Activated CD4-positive, alpha-beta memory T cell treated with anti-CD3 and anti-CD28 coated beads for 36 hours (primary cell): ENCODE measurements at regions of chr12 and their contacts with region 1.

Region 1: DNA sequence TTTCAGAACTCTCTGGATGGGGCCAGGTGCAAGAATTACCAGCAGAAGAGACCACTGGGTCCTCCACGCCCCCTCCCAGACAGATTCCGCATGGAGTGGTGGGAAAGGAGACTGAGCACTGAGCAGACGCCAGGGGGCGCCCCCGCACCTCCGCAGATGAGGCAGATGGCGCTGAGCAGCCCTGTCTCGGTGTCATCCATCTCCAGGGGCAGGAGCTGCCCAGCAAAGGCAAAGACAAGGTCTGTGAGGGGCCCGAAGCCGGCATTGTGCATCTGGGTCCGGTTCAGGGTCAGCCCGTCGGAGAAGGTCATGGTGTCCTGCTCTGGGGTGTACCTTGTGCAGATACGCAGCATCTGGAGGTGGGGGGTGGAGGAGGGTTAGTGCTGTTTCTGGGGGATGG is 6.3 kb upstream of the ITGB7 start:
- DNase-seq: peak; percentile 89
- H3K4me3 Mint-ChIP-seq: no peak overlapping the region
- H3K27ac Mint-ChIP-seq: no peak overlapping the region
- H3K4me1 Mint-ChIP-seq: peaks cover 61% of the 10 kb centered on the region
- H3K27me3 Mint-ChIP-seq: no peaks in the 10 kb centered on the region

Region 2: DNA sequence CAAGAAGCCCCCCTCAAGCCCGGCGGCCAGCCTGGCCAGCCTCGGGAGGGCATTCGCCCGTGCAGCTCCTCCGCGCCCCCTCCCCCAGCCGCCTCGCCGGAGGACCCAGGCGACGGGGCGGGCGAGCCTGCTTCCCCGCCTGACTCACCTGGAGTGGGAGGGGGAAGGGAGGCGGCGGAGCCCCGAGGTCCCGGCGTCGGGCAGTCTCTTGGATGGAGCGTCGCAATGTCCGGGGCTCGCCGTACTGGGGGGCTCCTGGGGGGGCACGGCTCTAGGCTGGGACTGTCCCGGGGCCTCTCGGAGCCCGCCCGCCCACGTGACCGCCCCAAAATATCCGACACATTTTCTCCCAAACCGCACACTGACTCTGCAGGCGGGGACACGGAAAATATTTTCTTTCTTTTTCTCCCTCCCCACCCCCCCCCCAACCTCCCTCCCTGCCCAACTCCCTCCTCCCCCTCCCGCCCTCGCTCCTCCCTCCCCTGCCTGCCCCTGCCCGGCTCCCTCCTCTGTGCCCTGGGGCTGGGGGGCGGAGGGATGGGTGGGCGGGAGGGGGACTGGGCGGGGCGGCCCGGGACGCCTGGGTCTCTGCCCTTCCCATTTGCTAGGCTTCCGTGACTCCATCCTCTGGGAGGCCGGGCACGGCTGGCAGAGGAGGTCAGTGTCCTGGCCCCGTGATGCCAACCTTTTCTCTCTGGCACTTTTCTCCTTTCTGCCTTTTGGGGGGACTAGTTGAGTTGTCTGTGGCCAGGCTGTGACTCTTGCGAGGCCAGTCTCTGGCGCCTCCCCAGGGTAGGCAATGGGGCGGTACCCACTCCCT is 18.7 kb after region 1 on chr12 and contains the start of gene RARG:
- CTCF ChIA-PET with region 1: interaction called, 30 read pairs
- POLR2A ChIA-PET with region 1: interaction called, 18 read pairs
- intact Hi-C with region 1: no loop called
- DNase-seq: peak; percentile 81
- H3K4me3 Mint-ChIP-seq: peak within 1 kb of the TSS; percentile 86
- H3K27ac Mint-ChIP-seq: peak within 1 kb of the TSS; percentile 91
- H3K4me1 Mint-ChIP-seq: peaks cover 74% of the 10 kb centered on the region
- H3K27me3 Mint-ChIP-seq: no peaks in the 10 kb centered on the region
- total RNA-seq, gene RARG: 21.8 to 25.2 TPM

Region 3: DNA sequence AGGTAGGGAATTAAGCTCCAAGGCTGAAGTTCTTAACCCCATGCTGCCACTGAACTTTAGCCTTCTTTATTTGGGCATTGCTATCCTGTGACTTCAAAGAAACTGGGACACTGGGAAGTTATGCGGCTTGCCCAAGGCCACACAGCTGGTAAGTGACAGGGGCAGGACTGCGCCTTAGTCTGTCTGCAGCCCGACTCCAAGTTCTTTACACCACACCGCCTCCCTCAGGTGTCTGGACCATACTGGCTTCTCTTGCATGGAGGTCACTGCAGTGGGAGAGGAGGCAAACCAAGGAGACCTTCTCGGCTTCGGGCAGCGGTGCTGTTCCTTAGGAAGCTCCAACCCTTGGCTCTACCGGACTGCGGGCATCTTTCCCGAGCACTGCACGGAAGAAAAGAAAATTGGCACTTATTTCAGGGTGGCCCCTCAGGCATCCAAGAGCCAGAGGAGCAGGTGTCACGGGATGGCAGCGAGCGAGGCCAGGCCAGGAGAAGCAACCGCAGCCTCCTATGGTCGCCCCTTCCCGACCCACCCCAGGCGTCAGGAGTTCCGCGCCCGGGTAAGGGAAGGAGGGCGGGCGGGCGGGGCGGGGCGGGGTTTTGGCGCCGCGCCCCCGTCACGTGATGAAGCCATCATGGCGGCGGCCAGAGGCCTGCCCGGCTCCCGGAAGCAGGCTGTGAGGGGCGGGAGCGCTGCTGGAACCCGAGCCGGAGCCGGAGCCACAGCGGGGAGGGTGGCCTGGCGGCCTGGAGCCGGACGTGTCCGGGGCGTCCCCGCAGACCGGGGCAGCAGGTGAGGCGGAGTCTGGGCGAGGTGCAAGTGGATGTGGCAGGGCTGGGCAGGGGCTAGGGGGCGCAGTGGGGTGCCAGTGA is 38.4 kb after region 1 on chr12:
- CTCF ChIA-PET with region 1: interaction called, 164 read pairs
- POLR2A ChIA-PET with region 1: interaction called, 5 read pairs
- intact Hi-C with region 1: loop called (anchors 1 kb)
- DNase-seq: peak; percentile 79
- H3K4me3 Mint-ChIP-seq: peak overlapping the region; percentile 97
- H3K27ac Mint-ChIP-seq: peak overlapping the region; percentile 89
- H3K4me1 Mint-ChIP-seq: peaks cover 40% of the 10 kb centered on the region
- H3K27me3 Mint-ChIP-seq: no peaks in the 10 kb centered on the region

Region 4: DNA sequence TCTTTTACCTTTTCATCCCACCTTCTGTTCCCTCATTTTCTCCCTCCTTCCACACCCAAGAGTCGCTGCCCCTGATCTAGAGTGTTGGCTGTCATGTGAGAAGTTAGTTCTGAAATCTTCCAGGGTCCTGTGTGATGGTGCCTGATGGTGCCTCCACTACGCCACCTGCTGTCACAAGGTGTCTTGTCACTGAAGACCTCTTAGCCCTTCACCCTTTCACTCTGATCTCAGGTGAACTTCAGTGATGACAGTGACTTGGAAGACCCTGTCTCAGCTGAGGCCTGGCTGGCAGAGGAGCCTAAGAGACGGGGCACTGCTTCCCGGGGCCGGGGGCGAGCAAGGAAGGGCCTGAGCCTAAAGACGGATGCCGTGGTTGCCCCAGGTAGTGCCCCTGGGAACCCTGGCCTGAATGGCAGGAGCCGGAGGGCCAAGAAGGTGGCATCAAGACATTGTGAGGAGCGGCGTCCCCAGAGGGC is 74.4 kb after region 1 on chr12:
- CTCF ChIA-PET with region 1: interaction called, 172 read pairs
- POLR2A ChIA-PET with region 1: no interaction called
- intact Hi-C with region 1: loop called (anchors 1 kb)
- DNase-seq: peak; percentile 76
- H3K4me3 Mint-ChIP-seq: no peak overlapping the region
- H3K27ac Mint-ChIP-seq: peak overlapping the region; percentile 68
- H3K4me1 Mint-ChIP-seq: peaks cover 19% of the 10 kb centered on the region
- H3K27me3 Mint-ChIP-seq: no peaks in the 10 kb centered on the region

Region 5: GRCh38 chr12:53344824-53345485 is 131.6 kb after region 1 on chr12:
- CTCF ChIA-PET with region 1: interaction called, 62 read pairs
- POLR2A ChIA-PET with region 1: interaction called, 3 read pairs
- intact Hi-C with region 1: loop called (anchors 1 kb)
- DNase-seq: peak; percentile 86
- H3K4me3 Mint-ChIP-seq: peak overlapping the region; percentile 92
- H3K27ac Mint-ChIP-seq: peak overlapping the region; percentile 56
- H3K4me1 Mint-ChIP-seq: peaks cover 14% of the 10 kb centered on the region
- H3K27me3 Mint-ChIP-seq: no peaks in the 10 kb centered on the region